H1 (cell line): ENCODE measurements at regions of chr9 and their contacts with region 1.

Region 1: DNA sequence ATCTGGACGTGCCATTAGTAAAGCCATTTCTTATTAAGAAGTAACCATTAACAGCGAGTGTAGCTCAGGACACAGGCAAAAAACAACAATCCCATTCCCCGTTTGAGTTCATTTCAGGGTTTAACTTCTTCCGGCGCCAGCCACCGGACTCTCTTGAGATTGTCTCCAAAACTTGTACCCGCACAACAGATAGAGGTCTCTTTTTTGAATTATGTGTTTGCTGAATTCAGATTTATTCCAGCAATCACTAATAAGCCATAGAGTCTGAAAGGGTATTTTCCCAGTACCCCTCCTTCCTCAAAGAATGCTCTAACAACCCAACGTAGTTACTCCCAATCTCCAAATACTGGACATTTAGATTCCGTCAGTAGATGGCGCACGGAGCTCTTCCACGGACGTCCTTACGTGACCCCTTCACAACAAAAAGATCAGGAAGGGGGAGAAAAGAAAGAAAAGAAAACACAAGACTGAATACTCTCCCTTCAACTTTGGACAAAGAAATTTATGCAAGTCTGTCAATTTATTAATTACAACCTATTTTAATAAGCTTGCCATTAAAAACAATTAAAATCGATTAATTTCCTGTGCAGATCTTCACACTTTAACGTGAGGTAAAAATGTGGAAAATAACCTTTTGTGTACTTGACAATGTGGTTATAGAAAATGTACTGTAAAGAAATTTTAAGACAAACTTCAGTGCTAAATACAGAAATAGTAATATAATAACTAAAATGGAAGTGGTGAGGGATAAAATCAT is 2.5 kb upstream of the MLLT3 start:
- DNase-seq: no peak
- H3K4me3 ChIP-seq: peak overlapping the region; percentile 18 to 97 (median 25); a peak in 4 of 8 replicates
- H3K27ac ChIP-seq: no peak overlapping the region
- H3K4me1 ChIP-seq: peaks cover 0 to 17% (median 2%) of the 10 kb centered on the region in 4 experiments; a peak in 5 of 7 replicates
- H3K27me3 ChIP-seq: peaks cover 11 to 39% (median 36%) of the 10 kb centered on the region in 4 experiments
- CTCF ChIP-seq: peak; percentile 56 to 76 (median 70)
- EP300 ChIP-seq: no peak
- POLR2A ChIP-seq: no peak
- RAD21 ChIP-seq: peak; percentile 85 to 87

Region 2: GRCh38 chr9:20611751-20612287 is 13.0 kb before region 1 on chr9:
- CTCF ChIA-PET with region 1: interaction called, 11 read pairs
- POLR2A ChIA-PET with region 1: interaction called, 3 read pairs
- DNase-seq: no peak
- H3K4me3 ChIP-seq: no peak overlapping the region
- H3K27ac ChIP-seq: no peak overlapping the region
- H3K4me1 ChIP-seq: no peaks in the 10 kb centered on the region
- H3K27me3 ChIP-seq: no peaks in the 10 kb centered on the region
- CTCF ChIP-seq: peak in 1 of 3 experiments; percentile 35; a peak in 2 of 4 replicates
- EP300 ChIP-seq: no peak
- POLR2A ChIP-seq: no peak
- RAD21 ChIP-seq: peak in 1 of 2 experiments; percentile 16; a peak in 2 of 4 replicates

Region 3: GRCh38 chr9:20636888-20637440 is 12.2 kb after region 1 on chr9:
- CTCF ChIA-PET with region 1: interaction called, 37 read pairs
- POLR2A ChIA-PET with region 1: interaction called, 3 read pairs
- DNase-seq: no peak
- H3K4me3 ChIP-seq: no peak overlapping the region
- H3K27ac ChIP-seq: no peak overlapping the region
- H3K4me1 ChIP-seq: peaks cover 0 to 4% (median 4%) of the 10 kb centered on the region in 4 experiments; a peak in 4 of 7 replicates
- H3K27me3 ChIP-seq: no peaks in the 10 kb centered on the region
- CTCF ChIP-seq: no peak
- EP300 ChIP-seq: no peak
- POLR2A ChIP-seq: no peak
- RAD21 ChIP-seq: no peak

Region 4: GRCh38 chr9:20689833-20690232 is 65.1 kb after region 1 on chr9:
- CTCF ChIA-PET with region 1: interaction called, 10 read pairs
- POLR2A ChIA-PET with region 1: no interaction called
- DNase-seq: no peak
- H3K4me3 ChIP-seq: no peak overlapping the region
- H3K27ac ChIP-seq: no peak overlapping the region
- H3K4me1 ChIP-seq: peaks cover under 1 to 6% (median 2%) of the 10 kb centered on the region in 4 experiments; a peak in 3 of 7 replicates
- H3K27me3 ChIP-seq: no peaks in the 10 kb centered on the region
- CTCF ChIP-seq: no peak
- EP300 ChIP-seq: no peak
- POLR2A ChIP-seq: no peak
- RAD21 ChIP-seq: no peak

Region 5: DNA sequence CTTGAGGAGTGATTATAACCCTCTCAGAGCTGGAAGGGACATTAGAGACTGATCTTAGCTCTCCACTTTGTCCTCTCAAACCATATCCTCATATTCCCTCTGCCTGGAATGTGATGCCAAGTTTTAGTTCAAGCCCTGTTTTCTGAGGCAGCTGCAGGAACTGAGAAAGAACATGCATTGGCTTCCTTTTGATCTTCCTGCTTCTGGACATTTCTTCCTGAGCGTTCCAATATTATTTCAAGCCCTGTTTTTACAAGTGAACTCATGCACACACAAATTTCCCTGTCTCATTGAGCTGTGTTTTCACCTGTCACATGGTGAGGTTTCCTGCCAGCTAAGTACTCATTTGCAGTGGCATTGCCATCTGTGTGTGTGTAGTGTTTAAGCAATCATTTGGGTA is 76.3 kb after region 1 on chr9:
- CTCF ChIA-PET with region 1: interaction called, 11 read pairs
- POLR2A ChIA-PET with region 1: no interaction called
- DNase-seq: no peak
- H3K4me3 ChIP-seq: no peak overlapping the region
- H3K27ac ChIP-seq: no peak overlapping the region
- H3K4me1 ChIP-seq: peaks cover 0 to 5% (median 0%) of the 10 kb centered on the region in 4 experiments; a peak in 2 of 7 replicates
- H3K27me3 ChIP-seq: no peaks in the 10 kb centered on the region
- CTCF ChIP-seq: no peak
- EP300 ChIP-seq: no peak
- POLR2A ChIP-seq: no peak
- RAD21 ChIP-seq: no peak

Region 6: DNA sequence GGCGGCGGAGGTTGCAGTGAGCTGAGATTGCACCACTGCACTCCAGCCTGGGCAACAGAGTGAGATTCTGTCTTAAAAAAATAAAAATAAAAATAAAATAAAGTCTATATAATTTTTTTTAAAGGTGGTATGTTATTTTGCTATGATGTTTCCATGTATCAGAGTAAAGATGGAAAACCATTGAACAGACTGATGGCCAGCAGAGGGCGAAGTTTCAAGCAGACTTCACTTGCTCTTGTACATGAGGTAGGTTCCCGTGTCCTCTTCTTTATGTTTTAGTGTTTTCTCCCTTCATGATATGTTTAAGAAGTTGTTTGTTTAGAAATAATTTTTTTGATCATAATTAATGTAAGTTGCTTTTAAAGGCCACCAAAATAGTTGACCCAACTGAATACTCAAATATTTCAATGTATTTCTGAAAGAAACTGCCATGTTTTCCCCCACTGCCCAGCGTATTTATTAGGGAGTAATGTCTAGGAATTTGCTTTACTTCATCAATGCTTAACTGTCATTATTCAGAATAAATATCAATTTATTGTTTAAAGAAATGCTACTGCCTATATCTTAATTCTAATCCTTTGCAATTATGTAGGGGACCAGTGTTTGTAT is 260.3 kb after region 1 on chr9:
- CTCF ChIA-PET with region 1: interaction called, 18 read pairs
- POLR2A ChIA-PET with region 1: no interaction called
- DNase-seq: peak; percentile 7 to 66
- H3K4me3 ChIP-seq: no peak overlapping the region
- H3K27ac ChIP-seq: no peak overlapping the region
- H3K4me1 ChIP-seq: no peaks in the 10 kb centered on the region
- H3K27me3 ChIP-seq: no peaks in the 10 kb centered on the region
- CTCF ChIP-seq: peak in 2 of 3 experiments; percentile 52 to 66; a peak in 3 of 4 replicates
- EP300 ChIP-seq: no peak
- POLR2A ChIP-seq: no peak
- RAD21 ChIP-seq: peak; percentile 45 to 53